G401 (cell line): ENCODE measurements at regions of chr9 and their contacts with region 1.

Region 1: GRCh38 chr9:124697326-124698200 is 73.5 kb downstream of the NR6A1 start:
- DNase-seq: no peak

Region 2: DNA sequence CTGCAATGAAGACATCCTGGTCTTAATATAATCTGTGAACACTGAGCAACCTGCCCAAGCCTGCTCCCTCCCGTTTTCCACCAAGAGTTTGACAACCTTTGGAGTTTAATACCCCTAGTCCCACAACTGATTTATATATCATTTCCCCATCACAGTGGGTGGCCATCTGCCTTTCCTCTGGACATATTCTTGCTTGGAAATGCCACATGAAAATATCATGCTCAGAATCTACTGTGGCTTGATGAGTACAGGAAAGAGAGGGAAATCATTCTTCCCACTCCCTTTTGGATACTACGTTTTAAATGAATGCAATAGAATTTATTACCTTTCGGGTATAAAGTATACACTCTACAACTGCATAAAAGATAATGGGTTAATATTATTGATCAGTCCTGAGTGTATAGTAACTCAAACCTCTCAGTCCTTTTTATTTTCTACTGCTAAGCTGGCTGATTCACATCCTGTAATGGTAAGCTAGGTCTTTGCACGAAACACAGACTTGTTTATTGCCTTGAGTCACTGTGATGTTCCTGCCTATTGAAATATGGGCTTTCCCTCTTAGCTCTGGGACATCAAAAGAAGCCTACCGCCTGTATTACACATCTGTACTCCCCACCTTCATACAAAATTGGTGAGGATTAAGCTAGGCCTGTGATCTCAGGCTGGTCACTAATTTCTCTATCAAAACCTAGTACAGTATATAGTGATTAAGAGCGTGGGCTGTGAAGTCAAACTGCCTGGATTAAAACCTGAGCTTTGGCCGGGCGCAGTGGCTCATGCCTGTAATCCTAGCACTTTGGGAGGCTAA is 122.8 kb before region 1 on chr9:
- in situ Hi-C with region 1: loop called (anchors 25 kb)
- DNase-seq: no peak

Region 3: GRCh38 chr9:124632077-124632621 is 65.4 kb before region 1 on chr9:
- in situ Hi-C with region 1: loop called (anchors 10 kb)
- DNase-seq: no peak